Activated CD4-positive, alpha-beta memory T cell treated with anti-CD3 and anti-CD28 coated beads for 36 hours (primary cell): ENCODE measurements at regions of chr15 and their contacts with region 1.

Region 1: GRCh38 chr15:59688841-59689625 is at the start of gene BNIP2:
- DNase-seq: peak; percentile 98
- H3K4me3 Mint-ChIP-seq: peak within 1 kb of the TSS; percentile 90
- H3K27ac Mint-ChIP-seq: peak within 1 kb of the TSS; percentile 93
- H3K4me1 Mint-ChIP-seq: peaks cover 43% of the 10 kb centered on the region
- H3K27me3 Mint-ChIP-seq: no peaks in the 10 kb centered on the region
- total RNA-seq, gene BNIP2: 55.2 to 58.0 TPM

Region 2: GRCh38 chr15:58770857-58771620 is 918.0 kb before region 1 on chr15 and contains the start of gene MINDY2:
- CTCF ChIA-PET with region 1: no interaction called
- POLR2A ChIA-PET with region 1: no interaction called
- intact Hi-C with region 1: loop called (anchors 5 kb)
- DNase-seq: peak; percentile 97
- H3K4me3 Mint-ChIP-seq: no peak within 1 kb of the TSS
- H3K27ac Mint-ChIP-seq: peak within 1 kb of the TSS; percentile 73
- H3K4me1 Mint-ChIP-seq: peaks cover 9% of the 10 kb centered on the region
- H3K27me3 Mint-ChIP-seq: no peaks in the 10 kb centered on the region
- total RNA-seq, gene MINDY2: 8.0 to 11.6 TPM

Region 3: DNA sequence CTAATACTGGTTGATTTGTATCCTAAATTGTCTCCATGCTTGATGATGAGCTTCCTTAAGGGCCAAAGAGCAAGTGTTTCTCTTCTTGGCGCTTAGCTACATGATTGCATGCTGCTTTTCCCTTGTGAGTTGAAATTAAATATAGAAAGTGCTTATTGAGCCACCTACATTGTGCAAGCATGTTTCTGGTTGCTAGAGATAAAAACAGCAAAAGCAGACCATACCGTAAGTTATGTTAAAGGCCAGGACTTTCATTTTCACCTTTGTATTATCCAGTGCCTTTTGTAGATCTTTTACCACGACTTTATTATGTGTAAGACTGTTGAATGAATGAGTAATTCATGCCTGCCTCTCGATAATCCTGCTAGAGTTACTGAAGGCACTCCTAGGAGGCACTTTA is 626.0 kb before region 1 on chr15:
- CTCF ChIA-PET with region 1: no interaction called
- POLR2A ChIA-PET with region 1: no interaction called
- intact Hi-C with region 1: no loop called
- DNase-seq: no peak
- H3K4me3 Mint-ChIP-seq: no peak overlapping the region
- H3K27ac Mint-ChIP-seq: no peak overlapping the region
- H3K4me1 Mint-ChIP-seq: peaks cover 2% of the 10 kb centered on the region
- H3K27me3 Mint-ChIP-seq: no peaks in the 10 kb centered on the region

Region 4: GRCh38 chr15:59528965-59529402 is 160.0 kb before region 1 on chr15:
- CTCF ChIA-PET with region 1: interaction called, 3 read pairs
- POLR2A ChIA-PET with region 1: no interaction called
- intact Hi-C with region 1: loop called (anchors 2 kb)
- DNase-seq: peak; percentile 77
- H3K4me3 Mint-ChIP-seq: no peak overlapping the region
- H3K27ac Mint-ChIP-seq: no peak overlapping the region
- H3K4me1 Mint-ChIP-seq: peaks cover 9% of the 10 kb centered on the region
- H3K27me3 Mint-ChIP-seq: peaks cover 13% of the 10 kb centered on the region

Region 5: GRCh38 chr15:59656897-59657634 is 32.0 kb before region 1 on chr15 and contains the start of gene GTF2A2:
- CTCF ChIA-PET with region 1: interaction called, 3 read pairs
- POLR2A ChIA-PET with region 1: interaction called, 6 read pairs
- intact Hi-C with region 1: loop called (anchors 1 kb)
- DNase-seq: peak; percentile 97
- H3K4me3 Mint-ChIP-seq: peak within 1 kb of the TSS; percentile 31
- H3K27ac Mint-ChIP-seq: peak within 1 kb of the TSS; percentile 81
- H3K4me1 Mint-ChIP-seq: peaks cover 5% of the 10 kb centered on the region
- H3K27me3 Mint-ChIP-seq: no peaks in the 10 kb centered on the region
- total RNA-seq, gene GTF2A2: 165 to 167 TPM

Region 6: DNA sequence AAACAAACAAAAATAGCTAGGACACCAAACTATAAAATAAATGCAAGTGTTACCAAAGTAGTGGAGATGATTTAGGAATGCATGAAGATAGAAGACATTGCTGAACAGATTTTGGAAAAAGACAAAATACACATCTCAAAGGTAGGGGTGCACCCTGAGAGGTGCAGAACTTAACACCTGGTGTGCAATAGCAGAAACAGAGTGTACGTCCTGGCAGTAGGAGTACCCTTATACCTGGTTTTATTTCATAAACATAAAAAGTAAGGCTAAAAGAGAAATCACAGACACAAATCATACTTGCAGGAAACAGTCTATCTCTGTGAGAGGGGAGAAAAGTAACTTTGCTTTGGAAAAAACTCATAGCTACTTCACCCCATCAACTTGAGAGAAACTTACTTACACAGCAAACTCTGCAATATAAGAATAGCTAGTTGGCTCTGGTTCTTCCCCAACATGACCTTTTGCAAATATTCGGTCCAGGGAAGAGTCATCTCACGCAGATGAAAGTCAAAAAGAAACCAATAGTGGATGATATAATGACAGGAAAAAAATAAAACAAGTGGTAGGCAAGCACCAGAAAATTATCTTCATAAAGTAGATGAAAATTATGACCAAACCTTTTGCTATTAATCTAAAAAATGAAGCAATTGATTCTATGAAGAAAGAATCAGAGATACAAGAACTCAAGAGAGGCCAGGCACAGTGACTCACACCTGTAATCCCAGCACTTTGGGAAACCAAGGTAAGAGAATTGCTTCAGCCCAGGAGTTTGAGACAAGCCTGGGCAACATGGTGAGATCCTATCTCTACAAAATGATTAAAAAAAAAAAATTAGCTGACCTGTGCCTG is 108.9 kb after region 1 on chr15:
- CTCF ChIA-PET with region 1: no interaction called
- POLR2A ChIA-PET with region 1: no interaction called
- intact Hi-C with region 1: loop called (anchors 5 kb)
- DNase-seq: no peak
- H3K4me3 Mint-ChIP-seq: peak overlapping the region; percentile 9
- H3K27ac Mint-ChIP-seq: peak overlapping the region; percentile 19
- H3K4me1 Mint-ChIP-seq: peaks cover 66% of the 10 kb centered on the region
- H3K27me3 Mint-ChIP-seq: no peaks in the 10 kb centered on the region

Region 7: GRCh38 chr15:59933607-59934006 is 244.6 kb after region 1 on chr15:
- CTCF ChIA-PET with region 1: no interaction called
- POLR2A ChIA-PET with region 1: no interaction called
- intact Hi-C with region 1: no loop called
- DNase-seq: no peak
- H3K4me3 Mint-ChIP-seq: no peak overlapping the region
- H3K27ac Mint-ChIP-seq: no peak overlapping the region
- H3K4me1 Mint-ChIP-seq: no peaks in the 10 kb centered on the region
- H3K27me3 Mint-ChIP-seq: peaks cover 11% of the 10 kb centered on the region

Region 8: GRCh38 chr15:60179786-60180391 is 490.9 kb after region 1 on chr15:
- CTCF ChIA-PET with region 1: interaction called, 10 read pairs
- POLR2A ChIA-PET with region 1: no interaction called
- intact Hi-C with region 1: no loop called
- DNase-seq: peak; percentile 21
- H3K4me3 Mint-ChIP-seq: no peak overlapping the region
- H3K27ac Mint-ChIP-seq: no peak overlapping the region
- H3K4me1 Mint-ChIP-seq: no peaks in the 10 kb centered on the region
- H3K27me3 Mint-ChIP-seq: peaks cover 21% of the 10 kb centered on the region